Motor neuron (in vitro differentiated cells): ENCODE measurements at regions of chr2 and their contacts with region 1.

Region 1: GRCh38 chr2:217713395-217714286 is 289.2 kb downstream of the TNS1 start:
- ATAC-seq: peak; percentile 6 to 61 (median 50)
- H3K4me3 ChIP-seq: no peak overlapping the region
- H3K27ac ChIP-seq: no peak overlapping the region
- H3K4me1 ChIP-seq: peaks cover 10 to 16% of the 10 kb centered on the region in 2 donors

Region 2: GRCh38 chr2:216519154-216519762 is 1194.4 kb before region 1 on chr2:
- in situ Hi-C with region 1: loop called in 1 of 9 experiments (anchors 25 kb)
- ATAC-seq: peak; percentile 61 to 92 (median 80)
- H3K4me3 ChIP-seq: no peak overlapping the region
- H3K27ac ChIP-seq: no peak overlapping the region
- H3K4me1 ChIP-seq: peaks cover 0 to 10% of the 10 kb centered on the region in 2 donors

Region 3: DNA sequence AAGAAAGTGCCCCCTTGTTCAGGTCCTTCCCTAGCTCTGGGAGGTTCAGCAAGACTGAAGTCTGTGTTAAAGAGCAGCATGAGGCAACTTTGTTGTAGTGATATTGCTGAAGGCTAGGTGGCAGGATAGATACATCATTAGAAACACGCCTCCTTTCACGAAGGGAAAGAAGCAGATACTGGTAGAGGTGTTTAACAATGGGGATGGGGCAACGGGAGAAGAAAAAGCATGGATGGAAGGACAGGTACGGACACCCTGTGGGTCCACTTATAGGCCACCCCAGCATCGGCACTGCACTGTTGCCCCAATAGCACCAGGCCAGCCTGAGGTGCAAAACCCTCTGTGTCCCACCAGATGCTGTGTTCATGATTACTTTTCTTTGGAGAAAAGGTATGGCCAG is 1014.7 kb before region 1 on chr2:
- in situ Hi-C with region 1: loop called in 8 of 9 experiments (anchors 25 kb)
- ATAC-seq: peak; percentile 30 to 53 (median 46)
- H3K4me3 ChIP-seq: no peak overlapping the region
- H3K27ac ChIP-seq: no peak overlapping the region
- H3K4me1 ChIP-seq: peaks cover 54 to 67% of the 10 kb centered on the region in 2 donors

Region 4: GRCh38 chr2:217142649-217143266 is 570.9 kb before region 1 on chr2:
- in situ Hi-C with region 1: no loop called
- ATAC-seq: no peak
- H3K4me3 ChIP-seq: no peak overlapping the region
- H3K27ac ChIP-seq: no peak overlapping the region
- H3K4me1 ChIP-seq: no peaks in the 10 kb centered on the region

Region 5: DNA sequence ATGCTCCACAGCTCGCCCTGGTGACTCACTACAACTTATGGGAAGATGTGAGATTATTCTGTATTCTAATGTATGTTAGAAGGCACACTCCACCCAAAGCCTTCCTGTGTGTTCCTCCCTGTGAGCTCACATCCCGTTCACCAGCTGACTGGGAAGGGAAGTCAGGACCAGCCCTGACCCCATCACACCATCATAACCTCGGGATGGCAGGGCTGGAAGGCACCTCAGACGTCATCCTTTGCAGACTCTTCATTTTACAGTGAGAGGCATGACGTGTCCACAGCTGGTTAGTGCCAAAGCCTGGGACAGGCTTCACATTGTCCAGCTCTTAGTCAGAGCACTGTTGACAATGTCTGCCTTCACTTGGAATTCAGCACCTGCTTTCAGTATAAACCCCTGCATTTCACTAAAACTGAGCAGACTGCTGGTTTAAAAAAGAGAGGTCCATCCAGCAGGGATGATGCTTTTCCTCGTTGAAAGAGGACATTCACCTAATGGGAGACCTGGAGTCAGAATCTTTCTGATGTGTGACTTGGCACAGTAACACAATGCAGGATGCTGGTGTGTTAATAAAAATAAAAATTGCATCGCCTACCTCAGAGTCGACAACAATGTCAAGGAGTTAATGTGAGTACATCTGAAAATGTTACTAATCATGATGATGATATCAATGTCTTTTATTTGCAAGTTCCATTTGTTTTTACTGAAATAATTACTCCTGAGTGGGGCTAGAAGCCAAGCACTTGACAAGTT is 435.8 kb before region 1 on chr2:
- in situ Hi-C with region 1: loop called in 1 of 9 experiments (anchors 25 kb)
- ATAC-seq: peak; percentile 47 to 93 (median 84)
- H3K4me3 ChIP-seq: no peak overlapping the region
- H3K27ac ChIP-seq: no peak overlapping the region
- H3K4me1 ChIP-seq: peaks cover 7 to 22% of the 10 kb centered on the region in 2 donors

Region 6: DNA sequence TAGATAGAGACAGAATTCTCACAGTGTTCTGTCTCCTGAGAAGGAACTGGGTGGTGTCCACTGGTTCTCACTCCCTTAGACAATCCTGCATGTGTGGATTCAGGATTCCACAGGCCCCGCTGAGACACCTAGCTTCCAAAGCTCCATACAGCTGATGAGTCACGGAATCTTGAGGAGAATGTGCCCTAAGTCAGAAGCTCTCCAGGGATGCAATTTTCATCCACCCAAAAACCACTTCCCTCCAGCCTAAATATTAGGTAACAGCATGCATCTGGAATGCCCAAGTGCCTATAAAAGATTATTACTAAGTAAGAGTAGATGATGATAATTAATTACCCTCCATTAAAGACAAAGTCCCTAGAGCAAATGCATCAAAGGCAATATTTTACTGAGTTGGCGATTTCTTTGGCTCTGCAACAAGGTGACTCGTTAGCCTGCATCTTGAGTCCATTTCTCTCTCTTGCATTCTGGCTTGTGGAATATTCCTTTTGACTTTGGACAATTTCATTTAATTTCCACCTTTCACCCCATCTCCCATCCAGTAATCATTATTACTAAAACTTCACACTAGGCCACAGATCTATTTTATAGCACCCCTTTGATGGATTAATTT is 185.9 kb before region 1 on chr2:
- in situ Hi-C with region 1: loop called in 2 of 9 experiments (anchors 25 kb)
- ATAC-seq: peak in 2 of 8 experiments; percentile 80
- H3K4me3 ChIP-seq: no peak overlapping the region
- H3K27ac ChIP-seq: no peak overlapping the region
- H3K4me1 ChIP-seq: peaks cover 0 to 3% of the 10 kb centered on the region in 2 donors

Region 7: GRCh38 chr2:217880287-217880889 is 166.7 kb after region 1 on chr2:
- in situ Hi-C with region 1: no loop called
- ATAC-seq: no peak
- H3K4me3 ChIP-seq: no peak overlapping the region
- H3K27ac ChIP-seq: no peak overlapping the region
- H3K4me1 ChIP-seq: no peaks in the 10 kb centered on the region

Region 8: DNA sequence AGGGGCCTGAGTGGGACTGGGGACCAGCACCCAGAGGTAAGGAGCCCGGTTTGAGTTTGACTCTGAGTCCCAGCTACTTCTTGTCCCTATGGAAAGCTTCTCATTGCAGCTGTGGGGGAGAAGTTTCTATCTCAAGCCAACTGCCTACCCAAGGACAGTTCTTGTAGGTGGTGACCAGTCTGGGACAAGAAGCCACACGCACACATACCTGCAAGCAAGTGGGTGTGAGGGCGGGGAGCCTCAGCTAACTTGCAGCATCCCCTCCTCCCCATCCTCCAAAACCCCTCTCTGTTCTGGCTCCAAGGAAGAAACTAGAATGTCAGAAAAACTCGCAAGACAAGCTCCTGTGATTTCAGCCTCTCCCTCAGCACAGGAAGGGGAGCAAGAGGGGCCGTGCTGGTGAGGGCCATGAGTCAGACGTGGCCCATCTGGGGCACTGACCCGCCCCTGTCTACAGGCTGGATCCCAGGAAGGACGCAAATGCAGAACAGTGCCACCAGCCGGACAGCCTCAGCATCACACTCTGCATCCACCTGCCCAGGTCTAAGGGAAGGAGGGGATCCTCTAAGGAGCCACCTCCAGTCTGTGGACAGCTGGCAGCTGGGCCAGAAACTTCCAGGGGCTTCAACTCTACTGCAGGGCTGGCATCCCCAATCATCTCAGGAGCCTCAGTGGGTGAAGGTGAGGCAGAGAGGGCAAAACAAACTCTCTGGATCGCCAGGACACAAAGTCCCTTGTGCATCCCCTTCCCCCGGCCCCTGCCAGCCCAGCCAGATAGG is 185.8 kb after region 1 on chr2:
- in situ Hi-C with region 1: no loop called
- ATAC-seq: peak; percentile 82 to 98 (median 92)
- H3K4me3 ChIP-seq: no peak overlapping the region
- H3K27ac ChIP-seq: no peak overlapping the region
- H3K4me1 ChIP-seq: peaks cover 0 to 2% of the 10 kb centered on the region in 2 donors